Endothelial cell of umbilical vein (primary cell): ENCODE measurements at regions of chr2 and their contacts with region 1.

Region 1: DNA sequence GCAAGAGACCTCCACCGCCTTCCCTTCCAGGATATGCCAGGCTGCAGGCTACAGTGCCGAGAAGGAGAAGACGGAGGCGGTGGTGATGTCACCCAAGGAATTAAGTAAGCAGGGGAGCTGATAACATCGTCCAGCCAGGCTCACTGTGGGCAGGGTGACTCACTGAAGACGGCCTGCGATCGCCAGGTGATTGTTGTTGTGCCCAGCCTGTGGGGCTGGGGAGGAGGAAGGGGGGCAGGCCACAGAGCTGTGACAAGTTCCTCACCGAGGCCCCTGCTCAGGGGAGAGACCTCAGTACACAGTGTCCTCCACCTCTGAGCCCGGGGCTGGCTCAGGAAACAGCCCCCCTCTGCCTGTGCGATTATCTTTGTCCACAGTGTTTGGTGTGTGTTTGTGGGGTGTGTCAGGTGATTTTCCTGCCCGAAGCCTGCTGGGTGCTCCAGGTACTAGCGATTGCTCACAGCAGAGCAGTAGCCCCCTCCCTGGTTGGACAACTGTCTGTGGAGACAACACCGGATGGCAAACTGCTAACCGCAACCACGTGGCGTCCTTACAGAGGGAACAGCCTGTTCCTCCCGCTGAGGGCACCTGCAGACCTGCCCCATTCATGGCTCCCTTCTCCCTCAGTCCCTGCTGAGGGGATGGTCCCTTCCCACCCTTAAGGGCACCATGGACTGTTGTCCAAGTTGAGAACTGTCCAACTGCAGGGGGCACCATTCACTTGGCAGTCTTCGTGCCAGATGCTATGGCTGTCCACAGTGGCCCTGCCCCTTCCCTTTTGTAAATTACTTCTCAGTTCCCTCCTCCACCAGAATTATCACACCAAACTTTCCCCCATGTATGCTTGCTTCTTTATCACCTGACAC is 95.1 kb downstream of the ZFP36L2 start:
- DNase-seq: peak; percentile 82
- H3K4me3 ChIP-seq: no peak overlapping the region
- H3K27ac ChIP-seq: peak overlapping the region; percentile 38
- H3K4me1 ChIP-seq: peaks cover 15% of the 10 kb centered on the region
- H3K27me3 ChIP-seq: no peaks in the 10 kb centered on the region
- CTCF ChIP-seq: peak; percentile 52 to 58
- POLR2A ChIP-seq: no peak

Region 2: DNA sequence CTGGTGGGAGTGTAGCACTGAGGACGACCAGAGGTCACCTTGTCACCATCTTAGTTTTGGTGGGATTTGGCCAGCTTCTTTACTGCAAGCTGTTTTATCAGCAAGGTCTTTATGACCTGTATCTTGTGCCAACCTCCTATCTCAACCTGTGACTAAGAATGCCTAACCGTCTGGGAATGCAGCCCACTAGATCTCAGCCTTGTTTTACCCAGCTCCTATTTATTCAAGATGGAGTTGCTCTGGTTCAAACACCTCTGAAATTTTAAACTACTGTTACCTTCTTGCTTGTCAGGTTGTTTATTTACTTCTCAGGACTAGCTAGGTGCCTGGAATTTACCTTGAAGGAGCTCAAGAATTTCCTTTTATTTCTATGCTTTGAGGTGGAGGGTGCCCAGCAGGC is 628.0 kb before region 1 on chr2:
- CTCF ChIA-PET with region 1: no interaction called
- POLR2A ChIA-PET with region 1: no interaction called
- dilution Hi-C with region 1: no loop called
- intact Hi-C with region 1: no loop called
- DNase-seq: no peak
- H3K4me3 ChIP-seq: no peak overlapping the region
- H3K27ac ChIP-seq: no peak overlapping the region
- H3K4me1 ChIP-seq: no peaks in the 10 kb centered on the region
- H3K27me3 ChIP-seq: no peaks in the 10 kb centered on the region
- CTCF ChIP-seq: no peak
- POLR2A ChIP-seq: no peak

Region 3: DNA sequence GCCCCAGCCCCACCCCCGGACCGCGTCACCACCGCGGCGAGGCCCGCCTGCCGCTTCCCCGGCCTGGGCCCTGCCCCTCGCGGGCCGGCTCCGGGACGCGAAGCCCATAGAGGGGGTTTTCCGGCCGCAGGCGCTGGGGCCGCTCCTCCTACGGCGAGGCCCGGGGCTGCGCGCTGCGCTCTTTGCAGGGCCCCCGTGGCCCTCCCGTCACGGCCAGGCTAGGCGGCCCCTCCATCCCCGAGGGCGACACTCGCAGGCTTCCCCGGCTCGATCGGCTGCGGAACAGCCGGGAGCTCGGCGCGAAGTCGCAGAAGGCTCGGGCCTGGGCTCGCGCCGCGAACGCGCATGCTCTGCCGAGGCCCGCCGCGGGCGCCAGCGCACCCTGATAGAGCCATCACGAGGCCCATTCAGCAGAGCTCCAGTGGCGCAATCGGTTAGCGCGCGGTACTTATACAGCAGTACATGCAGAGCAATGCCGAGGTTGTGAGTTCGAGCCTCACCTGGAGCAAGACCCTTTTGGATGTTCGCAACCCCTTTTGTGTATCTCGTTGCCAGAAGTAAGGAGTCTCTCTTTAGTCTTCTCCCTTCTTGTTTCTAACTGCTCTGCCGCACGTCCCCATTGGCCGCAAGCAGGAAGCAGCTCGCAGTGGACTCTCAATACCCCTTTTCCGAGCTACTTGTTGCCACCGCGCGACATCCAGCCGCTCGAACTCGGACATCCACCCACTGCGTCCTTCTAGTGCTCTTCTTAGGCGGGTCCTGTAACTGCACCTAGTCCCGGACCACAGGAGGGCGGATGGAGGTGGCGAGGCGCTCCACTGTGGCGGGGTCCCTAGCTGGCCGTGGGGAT is 320.9 kb before region 1 on chr2:
- CTCF ChIA-PET with region 1: no interaction called
- POLR2A ChIA-PET with region 1: no interaction called
- dilution Hi-C with region 1: no loop called
- intact Hi-C with region 1: no loop called
- DNase-seq: peak; percentile 98
- H3K4me3 ChIP-seq: peak overlapping the region; percentile 9 to 44 (median 35)
- H3K27ac ChIP-seq: peak overlapping the region; percentile 85
- H3K4me1 ChIP-seq: peaks cover 11% of the 10 kb centered on the region
- H3K27me3 ChIP-seq: peaks cover 0 to under 1% of the 10 kb centered on the region in 2 experiments
- CTCF ChIP-seq: no peak
- POLR2A ChIP-seq: peak; percentile 91

Region 4: GRCh38 chr2:42828487-42829425 is 302.5 kb before region 1 on chr2:
- CTCF ChIA-PET with region 1: no interaction called
- POLR2A ChIA-PET with region 1: no interaction called
- dilution Hi-C with region 1: no loop called
- intact Hi-C with region 1: loop called (anchors 1 kb)
- DNase-seq: peak; percentile 66
- H3K4me3 ChIP-seq: no peak overlapping the region
- H3K27ac ChIP-seq: no peak overlapping the region
- H3K4me1 ChIP-seq: no peaks in the 10 kb centered on the region
- H3K27me3 ChIP-seq: no peaks in the 10 kb centered on the region
- CTCF ChIP-seq: peak; percentile 91 to 93
- POLR2A ChIP-seq: no peak

Region 5: GRCh38 chr2:42944779-42945415 is 186.4 kb before region 1 on chr2:
- CTCF ChIA-PET with region 1: interaction called, 4 read pairs
- POLR2A ChIA-PET with region 1: no interaction called
- dilution Hi-C with region 1: no loop called
- intact Hi-C with region 1: loop called (anchors 1 kb)
- DNase-seq: no peak
- H3K4me3 ChIP-seq: no peak overlapping the region
- H3K27ac ChIP-seq: no peak overlapping the region
- H3K4me1 ChIP-seq: no peaks in the 10 kb centered on the region
- H3K27me3 ChIP-seq: no peaks in the 10 kb centered on the region
- CTCF ChIP-seq: no peak
- POLR2A ChIP-seq: no peak

Region 6: GRCh38 chr2:42974721-42975717 is 156.2 kb before region 1 on chr2:
- CTCF ChIA-PET with region 1: interaction called, 14 read pairs
- POLR2A ChIA-PET with region 1: no interaction called
- dilution Hi-C with region 1: no loop called
- intact Hi-C with region 1: loop called (anchors 1 kb)
- DNase-seq: peak; percentile 66
- H3K4me3 ChIP-seq: peak overlapping the region in 2 of 3 experiments; percentile 21 to 44
- H3K27ac ChIP-seq: no peak overlapping the region
- H3K4me1 ChIP-seq: peaks cover 4% of the 10 kb centered on the region
- H3K27me3 ChIP-seq: no peaks in the 10 kb centered on the region
- CTCF ChIP-seq: peak; percentile 81 to 95
- POLR2A ChIP-seq: no peak

Region 7: DNA sequence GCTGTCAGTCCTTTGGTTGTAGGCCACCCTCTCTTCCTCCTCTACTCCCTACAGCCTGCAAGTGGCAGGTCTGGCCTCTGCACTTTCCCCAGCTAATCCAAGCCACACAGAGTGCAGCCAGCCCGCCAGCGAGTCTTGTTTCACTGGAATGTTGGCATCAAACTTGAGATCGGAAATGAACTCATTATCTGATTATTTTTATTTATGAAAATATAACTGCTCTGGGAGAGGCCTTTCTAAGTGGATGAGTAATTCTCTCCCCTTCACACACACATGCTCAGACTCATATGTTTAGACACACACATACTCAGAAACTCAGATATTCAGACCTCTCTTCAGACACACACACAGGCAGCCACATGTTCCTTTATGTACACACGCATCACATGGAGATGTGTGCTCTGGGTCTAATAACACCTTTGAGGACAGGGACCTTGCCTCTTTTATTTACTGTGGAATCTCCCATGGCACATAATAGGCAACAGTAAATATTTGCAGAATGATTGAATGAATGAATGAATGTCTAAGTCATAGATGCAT is 56.1 kb before region 1 on chr2:
- CTCF ChIA-PET with region 1: interaction called, 4 read pairs
- POLR2A ChIA-PET with region 1: no interaction called
- dilution Hi-C with region 1: no loop called
- intact Hi-C with region 1: loop called (anchors 1 kb)
- DNase-seq: peak; percentile 97
- H3K4me3 ChIP-seq: no peak overlapping the region
- H3K27ac ChIP-seq: peak overlapping the region; percentile 95
- H3K4me1 ChIP-seq: peaks cover 27% of the 10 kb centered on the region
- H3K27me3 ChIP-seq: no peaks in the 10 kb centered on the region
- CTCF ChIP-seq: peak in 1 of 2 donors; percentile 1
- POLR2A ChIP-seq: peak; percentile 40

Region 8: DNA sequence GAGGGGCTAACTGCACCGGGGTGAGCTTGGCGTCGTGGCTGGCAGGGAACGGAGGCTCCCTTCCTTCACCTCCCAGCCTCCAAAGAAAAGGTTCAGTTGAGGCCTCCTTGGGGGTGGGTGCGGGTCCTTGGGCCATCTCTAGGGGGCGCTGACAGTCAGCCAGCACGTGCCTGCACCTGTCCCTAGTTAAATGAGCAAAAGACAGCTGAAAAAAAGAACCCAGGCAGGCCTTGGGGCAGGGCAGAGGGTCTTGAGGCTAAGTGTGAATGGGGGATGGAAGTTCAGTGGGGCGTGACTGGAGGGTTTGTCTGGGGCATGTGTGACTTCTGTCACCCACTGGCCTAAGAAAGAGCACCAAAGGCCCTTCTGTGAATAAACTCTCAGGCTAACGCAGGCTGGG is 38.7 kb after region 1 on chr2:
- CTCF ChIA-PET with region 1: interaction called, 9 read pairs
- POLR2A ChIA-PET with region 1: interaction called, 3 read pairs
- dilution Hi-C with region 1: no loop called
- intact Hi-C with region 1: loop called (anchors 1 kb)
- DNase-seq: peak; percentile 59
- H3K4me3 ChIP-seq: no peak overlapping the region
- H3K27ac ChIP-seq: peak overlapping the region; percentile 88
- H3K4me1 ChIP-seq: peaks cover 47% of the 10 kb centered on the region
- H3K27me3 ChIP-seq: no peaks in the 10 kb centered on the region
- CTCF ChIP-seq: peak; percentile 76 to 78
- POLR2A ChIP-seq: no peak

Region 9: DNA sequence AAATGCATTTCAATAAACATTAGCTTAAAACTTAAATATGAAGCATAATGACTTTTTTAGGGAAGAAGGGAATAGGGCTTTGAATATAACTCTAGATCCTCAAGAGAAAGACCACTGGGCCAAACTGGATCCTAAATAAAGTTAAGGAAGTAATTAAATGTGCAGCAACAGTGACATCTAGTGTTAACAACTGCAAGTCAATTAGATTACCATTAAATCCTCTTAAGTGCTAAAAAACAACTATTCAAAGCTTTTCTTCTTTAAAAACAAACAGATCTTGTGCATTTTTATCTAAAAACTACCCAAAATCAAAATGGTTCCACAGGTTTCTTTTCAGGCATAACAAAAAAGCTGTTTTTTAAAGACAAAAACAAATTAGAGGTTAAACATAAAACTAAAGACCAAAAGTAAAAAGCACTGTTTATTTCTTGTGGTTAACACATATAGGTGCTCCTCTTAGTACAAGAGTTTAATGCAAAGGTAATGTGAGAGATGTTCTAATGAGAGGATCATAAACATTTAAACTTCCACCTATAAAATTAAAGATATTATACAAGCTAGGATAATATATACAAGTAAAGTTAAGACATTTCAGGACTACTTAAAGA is 353.2 kb after region 1 on chr2:
- CTCF ChIA-PET with region 1: interaction called, 5 read pairs
- POLR2A ChIA-PET with region 1: no interaction called
- dilution Hi-C with region 1: no loop called
- intact Hi-C with region 1: loop called (anchors 1 kb)
- DNase-seq: peak; percentile 84
- H3K4me3 ChIP-seq: no peak overlapping the region
- H3K27ac ChIP-seq: no peak overlapping the region
- H3K4me1 ChIP-seq: peaks cover 7% of the 10 kb centered on the region
- H3K27me3 ChIP-seq: no peaks in the 10 kb centered on the region
- CTCF ChIP-seq: peak; percentile 31 to 32
- POLR2A ChIP-seq: no peak